Activated CD4-positive, alpha-beta T cell treated with anti-CD3 and anti-CD28 coated beads for 36 hours (primary cell): ENCODE measurements at regions of chr7 and their contacts with region 1.

Region 1: GRCh38 chr7:55964261-55965099 is at the start of gene NIPSNAP2:
- DNase-seq: peak; percentile 81
- ATAC-seq: peak; percentile 92
- H3K4me3 Mint-ChIP-seq: peak within 1 kb of the TSS; percentile 86
- H3K27ac Mint-ChIP-seq: peak within 1 kb of the TSS; percentile 90
- H3K4me1 Mint-ChIP-seq: peaks cover 33% of the 10 kb centered on the region
- H3K27me3 Mint-ChIP-seq: no peaks in the 10 kb centered on the region
- total RNA-seq, gene NIPSNAP2: 60.5 to 69.8 TPM

Region 2: DNA sequence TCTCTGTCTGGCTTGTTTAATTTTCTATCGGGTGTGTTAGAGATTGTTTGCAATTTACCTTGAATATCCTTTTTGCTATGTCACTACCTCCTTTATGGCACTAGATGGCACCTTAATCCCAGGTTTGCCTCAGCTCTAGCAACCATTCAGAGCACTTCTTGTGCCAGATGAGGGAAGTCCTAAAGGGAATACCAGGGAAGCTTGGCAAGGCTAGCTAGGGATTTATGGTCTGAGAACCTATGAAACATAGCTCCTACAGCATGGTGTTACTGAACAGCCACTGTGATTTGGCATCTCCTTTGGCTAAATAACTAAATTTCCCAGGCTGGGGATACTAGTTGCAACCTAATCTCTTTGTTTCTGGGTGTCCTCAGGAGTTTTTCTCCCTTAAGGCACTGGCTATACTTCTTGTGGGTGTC is 323.2 kb before region 1 on chr7:
- CTCF ChIA-PET with region 1: interaction called, 4 read pairs
- POLR2A ChIA-PET with region 1: interaction called, 7 read pairs
- intact Hi-C with region 1: loop called (anchors 1 to 5 kb)
- DNase-seq: peak; percentile 45
- ATAC-seq: peak; percentile 89
- H3K4me3 Mint-ChIP-seq: no peak overlapping the region
- H3K27ac Mint-ChIP-seq: no peak overlapping the region
- H3K4me1 Mint-ChIP-seq: peaks cover 9% of the 10 kb centered on the region
- H3K27me3 Mint-ChIP-seq: peaks cover 2% of the 10 kb centered on the region

Region 3: DNA sequence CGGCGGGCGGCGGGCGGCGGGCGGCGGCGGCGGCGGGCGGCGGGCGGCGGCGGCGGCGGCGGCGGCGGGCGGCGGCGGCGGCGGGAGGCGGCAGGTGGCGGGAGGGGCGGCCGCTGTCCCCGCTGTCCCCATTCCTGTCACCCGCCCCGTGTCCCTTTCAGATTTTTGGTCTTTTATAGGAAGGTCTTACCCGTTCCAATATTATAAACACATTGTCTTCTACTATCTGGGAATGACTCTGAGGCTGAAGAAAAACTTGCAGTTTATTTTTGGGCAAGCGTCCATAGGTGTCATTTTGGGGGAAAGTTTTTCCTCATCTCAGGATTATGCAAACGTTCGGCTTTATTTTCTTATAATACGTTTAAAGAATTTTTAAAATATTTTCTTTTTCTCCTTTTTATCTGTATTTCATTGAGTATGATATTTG is 76.6 kb before region 1 on chr7:
- CTCF ChIA-PET with region 1: no interaction called
- POLR2A ChIA-PET with region 1: no interaction called
- intact Hi-C with region 1: loop called in 1 of 2 experiments (anchors 1 kb)
- DNase-seq: peak; percentile 21
- ATAC-seq: no peak
- H3K4me3 Mint-ChIP-seq: peak overlapping the region; percentile 80
- H3K27ac Mint-ChIP-seq: peak overlapping the region; percentile 82
- H3K4me1 Mint-ChIP-seq: peaks cover 5% of the 10 kb centered on the region
- H3K27me3 Mint-ChIP-seq: no peaks in the 10 kb centered on the region

Region 4: GRCh38 chr7:55928006-55928767 is 36.3 kb before region 1 on chr7:
- CTCF ChIA-PET with region 1: no interaction called
- POLR2A ChIA-PET with region 1: no interaction called
- intact Hi-C with region 1: no loop called
- DNase-seq: no peak
- ATAC-seq: no peak
- H3K4me3 Mint-ChIP-seq: no peak overlapping the region
- H3K27ac Mint-ChIP-seq: no peak overlapping the region
- H3K4me1 Mint-ChIP-seq: no peaks in the 10 kb centered on the region
- H3K27me3 Mint-ChIP-seq: no peaks in the 10 kb centered on the region

Region 5: GRCh38 chr7:56051339-56052191 is 87.1 kb after region 1 on chr7 and contains the starts of genes CCT6A and PSPH:
- CTCF ChIA-PET with region 1: interaction called, 3 read pairs
- POLR2A ChIA-PET with region 1: interaction called, 4 read pairs
- intact Hi-C with region 1: loop called (anchors 1 to 5 kb)
- DNase-seq: peak; percentile 95
- ATAC-seq: peak; percentile 95
- H3K4me3 Mint-ChIP-seq: peak within 1 kb of the TSS; percentile 96
- H3K27ac Mint-ChIP-seq: peak within 1 kb of the TSS; percentile 95
- H3K4me1 Mint-ChIP-seq: peaks cover 49% of the 10 kb centered on the region
- H3K27me3 Mint-ChIP-seq: no peaks in the 10 kb centered on the region
- total RNA-seq, gene CCT6A: 182 to 237 TPM
- total RNA-seq, gene PSPH: 24.4 to 30.3 TPM

Region 6: DNA sequence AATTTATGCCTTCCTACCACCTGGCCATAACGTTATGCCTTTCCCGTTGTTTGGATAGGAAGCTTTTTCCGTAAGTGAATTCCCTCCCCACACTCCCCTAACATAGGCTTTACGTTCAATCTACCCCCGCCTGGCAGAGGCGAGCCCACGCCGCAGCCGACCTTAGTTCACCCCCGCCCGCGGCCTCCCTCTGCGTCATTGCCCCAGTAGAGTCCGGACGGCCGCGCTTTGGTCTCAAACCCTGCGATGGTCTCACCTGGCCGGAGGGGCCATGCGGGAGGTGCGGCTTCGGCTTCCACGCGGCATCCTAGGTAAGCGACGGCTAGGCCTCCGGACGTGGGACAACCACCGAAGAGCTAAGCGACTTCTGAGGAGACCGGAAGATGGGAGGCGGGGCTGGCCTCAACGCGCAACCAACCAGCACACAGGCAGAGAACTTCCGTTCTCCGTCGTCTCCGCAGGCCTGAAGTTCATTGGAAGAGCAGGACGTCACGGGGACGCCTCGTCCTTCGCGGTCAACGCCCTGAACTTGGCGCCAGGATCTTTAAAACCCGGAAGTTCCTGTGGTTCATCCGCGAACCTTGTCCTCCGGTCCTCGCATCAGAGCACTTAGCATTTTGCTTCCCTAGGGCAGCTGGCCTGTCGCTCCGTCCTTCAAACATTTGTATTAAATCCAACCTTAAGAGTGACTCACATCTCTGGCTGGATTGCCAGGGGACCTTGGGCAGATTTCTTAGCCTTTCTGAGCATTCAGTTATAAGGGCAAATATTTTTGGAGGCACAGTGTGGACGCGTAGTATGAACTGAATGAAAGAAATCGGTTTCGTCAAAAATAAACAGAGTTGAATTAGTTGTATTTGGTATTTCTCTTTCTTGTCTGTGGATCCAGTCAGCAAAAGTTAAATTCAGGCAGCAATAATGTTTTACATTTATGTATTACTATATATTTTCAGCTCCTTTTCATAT is 141.9 kb after region 1 on chr7 and contains the start of gene CHCHD2:
- CTCF ChIA-PET with region 1: interaction called, 3 read pairs
- POLR2A ChIA-PET with region 1: no interaction called
- intact Hi-C with region 1: loop called in 1 of 2 experiments (anchors 1 kb)
- DNase-seq: peak; percentile 96
- ATAC-seq: peak; percentile 98
- H3K4me3 Mint-ChIP-seq: peak within 1 kb of the TSS; percentile 90
- H3K27ac Mint-ChIP-seq: peak within 1 kb of the TSS; percentile 99
- H3K4me1 Mint-ChIP-seq: peaks cover 37% of the 10 kb centered on the region
- H3K27me3 Mint-ChIP-seq: no peaks in the 10 kb centered on the region
- total RNA-seq, gene CHCHD2: 537 to 693 TPM